ENCODE measurements at regions of chr10 and their contacts with region 1.

Region 1: DNA sequence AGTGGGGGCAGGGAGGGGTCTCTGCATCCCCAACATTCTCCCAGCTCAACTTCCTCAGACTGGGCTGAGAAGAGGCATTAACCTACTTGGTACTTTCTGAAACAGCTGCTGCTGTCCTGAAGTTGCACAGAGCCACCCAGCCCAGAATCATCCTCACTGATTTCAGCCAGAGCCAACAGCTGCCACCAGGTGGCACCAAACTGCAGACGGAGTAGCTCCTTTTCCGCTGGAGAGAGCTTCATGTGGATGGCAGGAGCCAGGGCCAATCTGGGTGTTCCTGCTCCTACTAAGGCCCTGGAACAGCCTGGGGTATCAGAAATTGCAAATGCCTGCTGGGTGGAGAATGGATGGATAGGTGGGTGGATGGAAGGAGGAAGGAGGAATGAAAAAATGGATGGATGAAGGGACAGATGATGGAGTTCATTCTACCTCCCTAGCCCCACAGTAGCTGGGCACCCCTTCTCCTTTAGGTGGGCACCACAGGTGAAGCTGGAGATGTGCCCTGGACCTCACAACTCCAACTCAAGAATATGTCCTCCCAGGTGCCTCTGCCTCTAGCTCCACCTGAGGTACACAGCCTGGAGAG is 11.8 kb upstream of the DRGX start:
- DNase-seq: peak; percentile 53 to 64 (median 57)
- H3K4me3 ChIP-seq: no peak overlapping the region
- H3K4me3 Mint-ChIP-seq: no peak overlapping the region
- H3K27ac ChIP-seq: no peak overlapping the region
- H3K27ac Mint-ChIP-seq: peak overlapping the region in 1 of 7 donors; percentile 64
- H3K4me1 ChIP-seq: no peaks in the 10 kb centered on the region
- H3K4me1 Mint-ChIP-seq: peaks cover 0 to 2% (median 0%) of the 10 kb centered on the region in 4 donors
- H3K27me3 ChIP-seq: no peaks in the 10 kb centered on the region
- H3K27me3 Mint-ChIP-seq: peaks cover 3 to 28% of the 10 kb centered on the region in 2 donors

Region 2: GRCh38 chr10:49418082-49418920 is 10.7 kb after region 1 on chr10:
- CTCF ChIA-PET with region 1: interaction called, 11 read pairs
- POLR2A ChIA-PET with region 1: no interaction called
- intact Hi-C with region 1: no loop called
- DNase-seq: no peak
- H3K4me3 ChIP-seq: no peak overlapping the region
- H3K4me3 Mint-ChIP-seq: no peak overlapping the region
- H3K27ac ChIP-seq: no peak overlapping the region
- H3K27ac Mint-ChIP-seq: no peak overlapping the region
- H3K4me1 ChIP-seq: no peaks in the 10 kb centered on the region
- H3K4me1 Mint-ChIP-seq: no peaks in the 10 kb centered on the region
- H3K27me3 ChIP-seq: no peaks in the 10 kb centered on the region
- H3K27me3 Mint-ChIP-seq: peaks cover 0 to 8% of the 10 kb centered on the region in 2 donors

Region 3: GRCh38 chr10:49500418-49500817 is 92.8 kb after region 1 on chr10:
- CTCF ChIA-PET with region 1: interaction called, 18 read pairs
- POLR2A ChIA-PET with region 1: no interaction called
- intact Hi-C with region 1: no loop called
- DNase-seq: no peak
- H3K4me3 ChIP-seq: no peak overlapping the region
- H3K4me3 Mint-ChIP-seq: no peak overlapping the region
- H3K27ac ChIP-seq: no peak overlapping the region
- H3K27ac Mint-ChIP-seq: no peak overlapping the region
- H3K4me1 ChIP-seq: no peaks in the 10 kb centered on the region
- H3K4me1 Mint-ChIP-seq: peaks cover 6 to 25% (median 13%) of the 10 kb centered on the region in 4 donors
- H3K27me3 ChIP-seq: no peaks in the 10 kb centered on the region
- H3K27me3 Mint-ChIP-seq: peaks cover 0 to 1% of the 10 kb centered on the region in 2 donors

Region 4: DNA sequence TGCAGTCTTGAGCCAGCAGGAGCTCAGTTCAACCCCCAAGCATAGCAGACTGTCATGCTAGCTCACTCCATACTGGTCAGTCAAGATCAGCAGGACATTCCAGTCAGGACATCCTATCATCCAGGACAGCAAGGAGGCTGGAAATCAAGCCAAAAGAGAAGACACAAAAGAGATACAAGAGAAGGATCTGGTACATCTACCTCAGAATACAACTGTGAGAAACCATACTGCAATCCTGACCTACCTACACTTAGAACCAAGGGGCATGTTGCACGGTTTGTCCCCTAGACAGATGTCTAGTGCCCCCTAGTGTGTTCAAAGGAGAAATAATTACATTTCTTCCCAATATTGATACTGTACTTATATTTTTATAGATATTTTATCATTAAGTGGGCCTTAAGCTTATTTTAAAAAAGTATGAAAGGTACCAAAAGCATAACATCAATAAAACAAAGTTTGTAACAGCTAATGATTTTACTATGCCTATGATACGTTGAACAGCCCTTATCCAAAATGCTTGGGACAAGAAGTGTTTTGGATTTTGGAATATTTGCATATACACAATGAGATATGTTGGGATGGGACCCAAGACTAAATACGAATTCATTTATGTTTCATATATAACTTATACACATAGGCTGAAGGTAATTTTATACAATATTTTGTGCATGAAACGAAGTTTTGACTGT is 104.6 kb after region 1 on chr10:
- CTCF ChIA-PET with region 1: interaction called, 327 read pairs
- POLR2A ChIA-PET with region 1: no interaction called
- intact Hi-C with region 1: loop called (anchors 1 kb)
- DNase-seq: peak in 4 of 5 donors; percentile 35 to 46 (median 38)
- H3K4me3 ChIP-seq: no peak overlapping the region
- H3K4me3 Mint-ChIP-seq: no peak overlapping the region
- H3K27ac ChIP-seq: no peak overlapping the region
- H3K27ac Mint-ChIP-seq: no peak overlapping the region
- H3K4me1 ChIP-seq: peaks cover 21% of the 10 kb centered on the region
- H3K4me1 Mint-ChIP-seq: peaks cover 20 to 28% (median 24%) of the 10 kb centered on the region in 4 donors
- H3K27me3 ChIP-seq: no peaks in the 10 kb centered on the region
- H3K27me3 Mint-ChIP-seq: no peaks in the 10 kb centered on the region

Region 5: DNA sequence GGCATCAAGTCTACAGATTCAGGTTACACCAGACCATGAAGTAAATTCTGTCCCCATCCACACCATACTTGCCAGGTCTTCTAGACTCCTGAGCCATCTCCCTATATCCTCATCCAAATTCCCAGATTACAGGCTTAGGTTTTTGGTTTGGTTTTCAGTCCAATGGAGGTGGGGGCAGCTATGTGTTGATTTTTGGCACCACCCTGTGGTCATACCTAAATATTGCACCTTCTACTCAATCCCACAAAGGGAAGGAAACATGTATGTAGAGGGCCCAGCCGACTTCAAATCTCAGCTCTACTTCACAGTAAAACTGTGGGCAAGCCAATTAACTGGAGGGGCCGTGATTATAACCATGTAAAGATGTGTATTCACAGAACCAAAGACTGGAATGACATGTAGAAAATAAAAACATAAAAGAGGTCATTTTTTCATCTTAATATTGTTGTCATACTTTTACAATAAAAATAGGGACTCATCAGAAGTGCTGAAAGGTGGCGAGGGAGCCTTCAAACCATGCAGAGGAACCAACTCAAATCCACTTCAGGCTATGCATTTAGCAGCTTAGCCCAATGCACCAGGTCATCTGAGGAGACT is 111.4 kb after region 1 on chr10:
- CTCF ChIA-PET with region 1: interaction called, 327 read pairs
- POLR2A ChIA-PET with region 1: no interaction called
- intact Hi-C with region 1: loop called (anchors 1 kb)
- DNase-seq: peak in 4 of 5 donors; percentile 38 to 46 (median 40)
- H3K4me3 ChIP-seq: no peak overlapping the region
- H3K4me3 Mint-ChIP-seq: no peak overlapping the region
- H3K27ac ChIP-seq: no peak overlapping the region
- H3K27ac Mint-ChIP-seq: peak overlapping the region in 1 of 7 donors; percentile 64
- H3K4me1 ChIP-seq: no peaks in the 10 kb centered on the region
- H3K4me1 Mint-ChIP-seq: peaks cover 6 to 10% (median 8%) of the 10 kb centered on the region in 4 donors
- H3K27me3 ChIP-seq: no peaks in the 10 kb centered on the region
- H3K27me3 Mint-ChIP-seq: no peaks in the 10 kb centered on the region

Region 6: DNA sequence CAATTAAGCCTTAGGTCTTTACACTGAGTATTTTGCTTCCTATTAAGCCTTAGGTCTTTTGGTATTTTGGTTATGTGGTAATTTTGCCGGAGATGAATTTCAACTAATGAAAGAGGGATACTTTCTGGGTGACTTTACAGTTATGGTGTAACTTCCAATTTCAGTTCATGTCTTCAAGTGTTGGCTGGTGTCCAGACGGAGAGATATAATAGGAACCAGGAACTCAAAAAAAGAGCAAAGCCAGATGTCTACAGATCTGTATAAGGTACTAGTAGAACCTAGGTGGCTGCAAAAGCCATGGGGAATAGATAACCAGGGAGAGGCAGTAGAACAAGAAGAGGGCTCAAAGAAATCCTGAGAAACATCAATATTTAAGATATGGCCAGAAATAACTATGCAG is 119.0 kb after region 1 on chr10:
- CTCF ChIA-PET with region 1: interaction called, 327 read pairs
- POLR2A ChIA-PET with region 1: no interaction called
- intact Hi-C with region 1: no loop called
- DNase-seq: no peak
- H3K4me3 ChIP-seq: no peak overlapping the region
- H3K4me3 Mint-ChIP-seq: no peak overlapping the region
- H3K27ac ChIP-seq: no peak overlapping the region
- H3K27ac Mint-ChIP-seq: peak overlapping the region in 1 of 7 donors; percentile 24
- H3K4me1 ChIP-seq: no peaks in the 10 kb centered on the region
- H3K4me1 Mint-ChIP-seq: peaks cover 7 to 13% (median 11%) of the 10 kb centered on the region in 4 donors
- H3K27me3 ChIP-seq: no peaks in the 10 kb centered on the region
- H3K27me3 Mint-ChIP-seq: no peaks in the 10 kb centered on the region